ENCODE measurements at regions of chr21 and their contacts with region 1.

Region 1: GRCh38 chr21:43659136-43660000 is at the starts of genes HSF2BP and RRP1B:
- DNase-seq: peak; percentile 89
- H3K4me3 ChIP-seq: peak within 1 kb of the TSS; percentile 84 to 96 (median 86)
- H3K27ac ChIP-seq: peak within 1 kb of the TSS; percentile 88 to 96 (median 91)
- H3K4me1 ChIP-seq: peaks cover 0 to 23% (median 18%) of the 10 kb centered on the region in 4 donors
- H3K27me3 ChIP-seq: no peaks in the 10 kb centered on the region
- CTCF ChIP-seq: no peak
- EP300 ChIP-seq: no peak
- POLR2A ChIP-seq: no peak
- total RNA-seq, gene HSF2BP: 0.16 to 0.83 (median 0.59) TPM
- total RNA-seq, gene RRP1B: 14.3 to 20.5 (median 17.6) TPM

Region 2: GRCh38 chr21:43718872-43719747 is 59.7 kb after region 1 on chr21 and contains the start of gene PDXK:
- intact Hi-C with region 1: loop called (anchors 2 kb)
- DNase-seq: peak; percentile 92
- H3K4me3 ChIP-seq: peak within 1 kb of the TSS; percentile 70 to 94 (median 72)
- H3K27ac ChIP-seq: peak within 1 kb of the TSS; percentile 81 to 86 (median 84)
- H3K4me1 ChIP-seq: peaks cover 0 to 35% (median 28%) of the 10 kb centered on the region in 4 donors
- H3K27me3 ChIP-seq: no peaks in the 10 kb centered on the region
- CTCF ChIP-seq: no peak
- EP300 ChIP-seq: no peak
- POLR2A ChIP-seq: no peak
- total RNA-seq, gene PDXK: 22.1 to 26.0 (median 23.9) TPM

Region 3: GRCh38 chr21:43789276-43790009 is 130.1 kb after region 1 on chr21 and contains the start of gene RRP1:
- intact Hi-C with region 1: loop called (anchors 2 kb)
- DNase-seq: peak; percentile 94
- H3K4me3 ChIP-seq: peak within 1 kb of the TSS; percentile 68 to 92 (median 80)
- H3K27ac ChIP-seq: peak within 1 kb of the TSS; percentile 87 to 93 (median 90)
- H3K4me1 ChIP-seq: peaks cover 0 to 21% (median 15%) of the 10 kb centered on the region in 4 donors
- H3K27me3 ChIP-seq: no peaks in the 10 kb centered on the region
- CTCF ChIP-seq: peak; percentile 43 to 100 (median 94)
- EP300 ChIP-seq: no peak
- POLR2A ChIP-seq: peak; percentile 44 to 83
- total RNA-seq, gene RRP1: 10.3 to 16.1 (median 11.8) TPM

Measured in sigmoid colon (tissue), 7 donors.